Activated T-helper 1 cell treated with anti-CD3 and anti-CD28 coated beads, Interleukin-12 subunit alpha, Interleukin-12 subunit beta, Interleukin-2, Interleukin-4 antibody, amounts not matched to agents 30 ng/mL and 10 ng/mL and 1 ng/mL, durations not matched to agents 14 hours and 24 hours and 36 hours (primary cell): ENCODE measurements at regions of chr12 and their contacts with region 1.

Region 1: DNA sequence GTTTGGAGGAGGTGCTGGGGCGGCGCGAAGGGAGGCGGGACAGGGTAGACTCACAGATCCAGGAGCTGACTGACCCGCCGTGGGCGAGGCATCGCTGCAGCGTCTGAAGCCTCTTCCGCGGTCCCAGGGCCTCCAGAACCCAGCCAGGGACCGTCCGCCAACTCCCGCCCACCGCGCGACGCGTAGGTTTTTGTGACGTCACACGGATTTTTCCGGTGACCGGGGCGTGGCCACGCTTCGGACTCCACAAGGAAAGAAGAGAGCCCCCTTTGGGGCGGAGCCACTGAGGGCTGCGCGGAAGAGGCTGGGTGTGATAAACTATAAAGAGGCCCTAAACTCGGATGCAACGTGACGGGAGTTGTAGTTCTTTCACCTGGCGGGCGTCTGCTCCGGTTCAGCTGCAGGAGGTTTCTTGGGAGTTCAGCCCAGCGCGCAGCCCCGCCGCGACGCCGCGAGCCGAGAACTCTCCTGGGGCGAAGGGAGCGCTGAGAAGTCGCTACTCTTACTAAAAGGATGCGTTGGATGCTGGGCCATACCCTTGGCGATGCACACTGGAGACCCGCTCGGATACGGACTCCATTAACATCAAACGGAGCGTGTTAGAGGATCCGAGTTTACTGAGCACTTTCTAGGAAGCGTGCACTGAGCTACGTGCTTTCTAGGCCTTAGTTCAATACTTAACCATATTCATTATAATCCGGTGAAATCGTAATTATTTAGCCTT is at the start of gene AMN1:
- DNase-seq: peak; percentile 100
- H3K4me3 Mint-ChIP-seq: peak within 1 kb of the TSS; percentile 98
- H3K27ac Mint-ChIP-seq: peak within 1 kb of the TSS; percentile 99
- H3K4me1 Mint-ChIP-seq: peaks cover 53% of the 10 kb centered on the region
- H3K27me3 Mint-ChIP-seq: no peaks in the 10 kb centered on the region
- total RNA-seq, gene AMN1: 3.1 and 3.4 TPM in 2 replicates

Region 2: GRCh38 chr12:31456562-31456961 is 272.5 kb before region 1 on chr12:
- intact Hi-C with region 1: no loop called
- DNase-seq: no peak
- H3K4me3 Mint-ChIP-seq: no peak overlapping the region
- H3K27ac Mint-ChIP-seq: no peak overlapping the region
- H3K4me1 Mint-ChIP-seq: no peaks in the 10 kb centered on the region
- H3K27me3 Mint-ChIP-seq: peaks cover 2% of the 10 kb centered on the region

Region 3: DNA sequence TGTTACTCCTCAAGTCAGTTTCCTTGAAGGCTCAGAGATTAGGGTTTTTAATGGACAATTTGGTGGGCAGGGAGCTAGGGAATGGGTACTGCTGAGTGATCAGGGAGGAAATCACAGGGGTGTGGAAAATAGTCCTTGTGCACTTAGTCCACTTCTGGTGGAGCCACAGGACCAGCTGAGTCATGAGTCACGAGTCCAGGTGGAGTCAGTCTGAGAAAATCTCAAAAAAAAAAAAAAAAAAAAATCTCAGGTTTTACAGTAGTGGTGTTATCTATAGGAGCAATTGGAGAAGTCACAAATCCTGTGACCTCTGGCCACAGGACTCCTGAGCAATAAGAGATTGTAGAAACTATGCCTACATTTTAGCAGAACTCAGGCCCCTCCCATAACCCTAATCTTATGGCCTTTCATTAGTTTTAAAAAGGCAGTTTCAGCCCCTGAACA is 27.9 kb after region 1 on chr12:
- intact Hi-C with region 1: loop called (anchors 2 kb)
- DNase-seq: no peak
- H3K4me3 Mint-ChIP-seq: no peak overlapping the region
- H3K27ac Mint-ChIP-seq: no peak overlapping the region
- H3K4me1 Mint-ChIP-seq: peaks cover 21% of the 10 kb centered on the region
- H3K27me3 Mint-ChIP-seq: no peaks in the 10 kb centered on the region

Region 4: GRCh38 chr12:31804185-31804504 is 75.1 kb after region 1 on chr12:
- intact Hi-C with region 1: loop called (anchors 2 kb)
- DNase-seq: no peak
- H3K4me3 Mint-ChIP-seq: peak overlapping the region; percentile 31
- H3K27ac Mint-ChIP-seq: peak overlapping the region; percentile 14
- H3K4me1 Mint-ChIP-seq: peaks cover 40% of the 10 kb centered on the region
- H3K27me3 Mint-ChIP-seq: no peaks in the 10 kb centered on the region

Region 5: GRCh38 chr12:31874961-31875608 is 146.0 kb after region 1 on chr12:
- intact Hi-C with region 1: loop called (anchors 1 kb)
- DNase-seq: peak; percentile 68
- H3K4me3 Mint-ChIP-seq: peak overlapping the region; percentile 80
- H3K27ac Mint-ChIP-seq: peak overlapping the region; percentile 100
- H3K4me1 Mint-ChIP-seq: peaks cover 30% of the 10 kb centered on the region
- H3K27me3 Mint-ChIP-seq: no peaks in the 10 kb centered on the region

Region 6: DNA sequence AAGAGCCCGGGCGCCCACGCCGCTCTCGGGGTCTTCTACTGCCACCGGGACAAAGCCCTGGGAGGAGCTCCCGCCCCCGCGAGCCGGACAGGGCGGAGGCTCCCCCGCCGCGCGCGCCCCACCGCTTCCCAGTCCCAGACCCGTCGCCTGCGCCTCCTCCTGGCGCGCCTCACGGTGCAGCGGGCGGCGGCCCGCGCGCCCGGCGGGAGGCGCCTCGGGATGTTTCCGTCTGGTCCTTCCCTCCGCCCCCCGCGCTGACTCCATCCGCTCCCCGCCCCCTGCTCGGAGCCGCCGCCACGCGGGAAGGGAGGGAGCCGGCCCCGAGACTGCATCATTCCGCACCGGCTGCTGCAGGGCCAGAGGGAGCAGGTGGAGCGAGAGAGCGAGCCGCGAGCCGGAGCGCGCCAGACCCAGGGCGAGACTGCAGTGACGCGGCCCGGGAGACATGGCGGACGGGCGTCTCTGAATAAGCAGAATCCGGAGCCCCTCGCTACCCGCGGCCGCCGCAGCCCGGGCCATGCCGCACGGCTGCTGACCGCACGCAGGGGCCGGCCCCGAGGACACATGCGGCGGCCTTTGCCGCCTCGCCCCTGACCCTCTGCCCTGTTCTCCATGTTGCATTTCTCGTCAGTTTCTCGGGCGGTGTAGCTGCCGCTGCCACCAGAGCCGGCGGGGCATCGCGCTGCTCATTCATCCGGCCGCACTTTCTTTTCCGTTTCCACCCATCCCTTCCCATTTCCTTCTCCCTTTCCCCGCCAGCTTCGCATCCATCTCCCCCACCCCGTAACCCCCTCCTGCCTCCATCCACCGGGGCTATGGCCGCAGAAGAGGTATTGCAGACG is 377.7 kb after region 1 on chr12 and contains the start of gene BICD1:
- intact Hi-C with region 1: loop called (anchors 1 kb)
- DNase-seq: peak; percentile 76
- H3K4me3 Mint-ChIP-seq: peak within 1 kb of the TSS; percentile 98
- H3K27ac Mint-ChIP-seq: peak within 1 kb of the TSS; percentile 87
- H3K4me1 Mint-ChIP-seq: peaks cover 36% of the 10 kb centered on the region
- H3K27me3 Mint-ChIP-seq: peaks cover 19% of the 10 kb centered on the region
- total RNA-seq, gene BICD1: 20.9 and 22.2 TPM in 2 replicates

Region 7: DNA sequence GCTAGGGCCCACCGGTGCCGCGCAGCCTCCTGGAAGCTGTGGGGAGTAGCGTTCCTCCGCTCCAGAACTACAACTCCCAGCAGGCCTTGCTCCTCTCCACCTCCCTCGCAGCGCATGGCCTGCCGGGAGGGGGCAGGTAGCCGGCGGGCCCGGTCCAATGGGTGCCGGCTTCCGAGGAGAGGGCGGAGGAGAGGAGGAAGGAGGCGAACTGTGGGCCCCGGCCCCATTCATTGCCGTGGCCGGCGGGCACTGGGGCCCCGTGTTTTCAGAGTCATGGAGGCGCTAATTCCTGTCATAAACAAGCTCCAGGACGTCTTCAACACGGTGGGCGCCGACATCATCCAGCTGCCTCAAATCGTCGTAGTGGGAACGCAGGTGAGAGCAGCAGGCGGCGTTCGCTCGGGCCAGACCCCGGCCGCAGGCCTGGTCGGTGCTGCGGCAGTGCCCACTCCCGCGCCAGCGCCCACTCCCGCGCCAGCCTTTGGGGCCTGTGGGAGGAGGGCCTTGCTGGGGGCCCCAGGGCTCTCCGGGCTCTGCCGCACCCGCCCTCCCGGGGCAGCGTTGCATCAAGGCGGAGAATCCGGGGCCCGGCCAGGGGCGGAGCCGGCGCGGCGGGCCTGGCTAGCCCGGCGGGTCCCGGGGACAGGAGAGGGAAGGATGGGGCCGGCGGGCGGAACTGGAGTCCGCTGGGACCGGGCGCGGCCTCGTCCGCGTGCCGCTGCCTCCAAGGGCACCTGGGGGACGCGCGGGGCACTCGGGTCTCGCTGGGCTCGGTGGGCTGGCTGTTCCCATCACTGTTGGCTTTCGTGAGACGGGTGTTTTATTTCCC is 950.2 kb after region 1 on chr12 and contains the start of gene DNM1L:
- intact Hi-C with region 1: loop called (anchors 1 kb)
- DNase-seq: peak; percentile 90
- H3K4me3 Mint-ChIP-seq: peak within 1 kb of the TSS; percentile 95
- H3K27ac Mint-ChIP-seq: peak within 1 kb of the TSS; percentile 92
- H3K4me1 Mint-ChIP-seq: peaks cover 35% of the 10 kb centered on the region
- H3K27me3 Mint-ChIP-seq: no peaks in the 10 kb centered on the region
- total RNA-seq, gene DNM1L: 87.0 and 91.9 TPM in 2 replicates